HEK293 (cell line): ENCODE measurements at regions of chr22 and their contacts with region 1.

Region 1: GRCh38 chr22:41557401-41558240 is 3.2 kb upstream of the CSDC2 start:
- H3K4me3 ChIP-seq: no peak overlapping the region
- H3K27ac ChIP-seq: no peak overlapping the region
- H3K4me1 ChIP-seq: no peaks in the 10 kb centered on the region; the same call in 1 of the 2 replicates
- CTCF ChIP-seq: no peak

Region 2: DNA sequence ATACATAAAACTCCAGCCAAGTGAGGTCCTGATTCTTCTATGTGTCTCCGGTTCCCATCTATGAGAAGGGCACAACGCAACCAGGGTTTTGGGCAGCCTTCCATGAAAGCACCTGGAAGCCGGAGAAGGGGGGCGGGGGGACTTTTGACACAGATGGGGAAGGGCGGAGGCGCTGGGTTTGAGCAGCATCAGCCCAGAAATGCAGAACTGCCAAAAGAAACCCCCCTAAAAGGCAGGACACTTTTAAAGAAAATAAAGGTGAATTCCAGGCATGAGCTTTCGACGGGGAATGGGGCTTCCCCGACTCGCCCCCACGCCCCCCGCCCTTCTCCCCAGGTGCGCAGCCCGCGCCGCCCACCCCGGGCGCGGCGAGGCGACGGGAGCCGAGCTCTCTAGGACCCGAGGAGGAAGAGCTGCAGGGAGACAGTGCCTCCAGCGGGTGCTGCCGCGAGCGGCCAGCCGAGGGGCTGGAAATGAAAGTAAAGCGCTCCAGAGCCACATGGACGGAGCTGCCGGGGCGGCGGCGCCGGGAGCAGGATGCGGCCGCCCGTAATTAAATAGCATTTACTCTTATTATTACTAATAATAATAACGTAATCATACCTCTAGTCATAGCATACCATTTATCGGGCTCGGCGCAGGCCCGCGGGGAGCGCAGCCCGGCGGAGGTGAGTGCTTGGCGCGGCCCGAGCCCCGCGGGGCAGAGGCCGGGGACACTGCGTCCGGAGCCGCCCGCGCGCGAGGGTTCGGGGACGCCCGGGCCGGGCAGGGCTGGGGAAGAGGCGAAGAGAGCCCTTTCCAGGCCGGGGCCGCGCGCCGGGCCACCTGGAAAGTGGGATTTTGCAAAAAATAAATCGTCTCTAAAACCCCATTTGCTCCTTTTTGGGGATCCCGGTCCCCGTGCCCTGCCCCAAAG is 256.3 kb before region 1 on chr22 and contains the start of gene ZC3H7B:
- CTCF ChIA-PET with region 1: no interaction called
- POLR2A ChIA-PET with region 1: no interaction called
- H3K4me3 ChIP-seq: peak within 1 kb of the TSS; percentile 82
- H3K27ac ChIP-seq: peak within 1 kb of the TSS; percentile 93
- H3K4me1 ChIP-seq: peaks cover 4% of the 10 kb centered on the region; the same call in 1 of the 2 replicates
- CTCF ChIP-seq: peak; percentile 82

Region 3: DNA sequence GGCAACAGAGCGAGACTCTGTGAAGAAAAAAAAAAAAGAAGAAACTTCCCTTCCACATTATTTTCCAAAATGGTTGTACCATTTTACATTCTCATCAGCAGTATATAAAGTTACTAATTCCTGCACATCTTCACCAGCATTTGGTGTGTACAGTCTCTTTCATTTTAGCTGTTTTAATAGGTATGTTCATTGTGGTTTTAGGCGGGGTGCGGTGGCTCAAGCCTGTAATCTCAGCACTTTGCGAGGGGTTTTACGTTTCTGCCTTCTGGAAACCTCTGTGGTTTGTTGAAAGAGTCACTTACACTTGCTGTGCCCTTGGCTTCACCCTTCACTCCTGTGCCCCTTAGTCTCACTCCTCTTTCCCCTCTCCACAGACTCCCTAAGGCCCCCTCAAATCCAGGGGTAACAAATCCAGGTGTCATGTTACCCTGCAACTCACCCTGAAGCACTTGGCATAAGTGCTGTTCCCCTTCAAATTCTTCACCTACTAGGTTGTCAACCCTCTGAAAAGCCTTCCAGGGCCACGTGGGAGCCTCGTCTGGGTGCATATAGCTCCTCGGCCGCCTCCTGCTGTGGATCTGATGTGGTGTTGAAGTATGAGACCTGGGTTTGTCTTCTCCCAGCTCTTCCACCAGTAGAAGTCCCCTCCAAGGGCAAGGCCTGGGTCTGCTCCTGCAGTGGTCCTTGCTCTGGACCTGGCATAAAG is 131.8 kb before region 1 on chr22:
- CTCF ChIA-PET with region 1: no interaction called
- POLR2A ChIA-PET with region 1: no interaction called
- H3K4me3 ChIP-seq: no peak overlapping the region
- H3K27ac ChIP-seq: peak overlapping the region; percentile 49; the same call in 1 of the 2 replicates
- H3K4me1 ChIP-seq: peaks cover 4% of the 10 kb centered on the region; the same call in 1 of the 2 replicates
- CTCF ChIP-seq: no peak

Region 4: DNA sequence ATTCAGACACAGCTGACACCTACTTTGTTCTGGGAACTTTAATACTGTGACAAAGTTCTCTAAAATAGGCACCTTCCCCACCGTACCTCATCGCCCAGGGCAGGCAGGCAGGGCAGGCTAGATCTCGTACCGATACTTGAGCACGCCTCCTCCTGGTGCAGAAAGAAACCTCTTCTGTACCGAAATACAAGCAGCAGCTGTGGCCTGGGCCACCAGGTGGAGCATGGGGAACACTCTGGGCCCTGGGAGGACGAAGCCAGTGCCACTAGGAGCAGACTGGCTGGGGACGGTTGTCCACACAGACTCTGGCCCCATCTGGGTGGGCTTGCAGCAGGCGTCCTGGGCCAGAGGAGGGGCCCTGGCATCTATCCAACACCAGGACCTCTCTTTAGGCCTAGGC is 19.3 kb after region 1 on chr22:
- CTCF ChIA-PET with region 1: interaction called, 7 read pairs
- POLR2A ChIA-PET with region 1: interaction called, 10 read pairs
- H3K4me3 ChIP-seq: no peak overlapping the region
- H3K27ac ChIP-seq: no peak overlapping the region
- H3K4me1 ChIP-seq: no peaks in the 10 kb centered on the region
- CTCF ChIP-seq: peak; percentile 89